B cell (primary cell): ENCODE measurements at regions of chr17 and their contacts with region 1.

Region 1: DNA sequence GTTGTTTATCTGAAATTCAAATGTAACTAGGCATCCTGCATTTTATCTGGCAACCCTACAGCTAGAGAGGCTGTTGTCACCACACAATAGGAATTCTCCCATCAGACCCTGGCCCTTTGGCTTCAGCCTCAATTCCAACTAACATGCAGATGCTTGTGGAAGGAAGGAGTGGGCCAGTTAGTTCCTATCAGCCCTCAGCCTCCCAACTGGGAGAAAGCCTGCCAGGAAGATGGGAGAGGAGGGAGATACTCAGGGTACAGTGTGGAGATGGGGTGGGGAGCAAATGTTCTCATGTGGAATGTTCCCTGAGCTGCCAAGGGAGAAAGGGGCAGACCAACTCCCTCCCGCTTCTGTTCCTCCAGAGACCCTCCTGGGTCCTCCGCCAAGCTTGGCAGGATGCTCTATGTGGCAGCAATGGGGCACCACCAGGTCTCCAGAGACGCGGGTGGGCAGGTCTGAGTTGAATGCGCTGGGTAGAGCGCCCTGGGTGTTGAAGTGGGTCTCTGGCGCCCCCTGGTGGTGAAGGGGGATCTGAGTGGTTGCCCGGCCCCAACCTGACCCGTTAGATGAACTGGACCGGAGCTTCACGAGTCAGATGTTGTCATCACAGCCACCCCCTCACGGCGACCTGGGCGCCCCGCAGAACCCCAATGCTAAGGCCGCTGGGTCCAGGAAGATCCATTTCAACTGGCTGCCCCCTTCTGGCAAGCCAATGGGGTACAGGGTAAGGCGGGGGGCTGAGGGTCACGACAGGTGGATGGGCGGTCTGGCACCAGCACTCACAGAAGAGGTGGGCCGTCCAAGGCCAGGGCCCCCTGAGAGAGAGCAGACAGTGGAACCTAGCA is 15.2 kb downstream of the GALK1 start:
- DNase-seq: peak; percentile 91
- ATAC-seq: peak; percentile 76
- H3K4me3 ChIP-seq: no peak overlapping the region
- H3K4me3 Mint-ChIP-seq: peak overlapping the region; percentile 35
- H3K27ac ChIP-seq: no peak overlapping the region
- H3K27ac Mint-ChIP-seq: peak overlapping the region; percentile 64
- H3K4me1 ChIP-seq: peaks cover 9 to 34% of the 10 kb centered on the region in 2 donors
- H3K4me1 Mint-ChIP-seq: peaks cover 21% of the 10 kb centered on the region
- H3K27me3 ChIP-seq: no peaks in the 10 kb centered on the region
- H3K27me3 Mint-ChIP-seq: peaks cover 4% of the 10 kb centered on the region
- CTCF ChIP-seq: peak; percentile 86

Region 2: DNA sequence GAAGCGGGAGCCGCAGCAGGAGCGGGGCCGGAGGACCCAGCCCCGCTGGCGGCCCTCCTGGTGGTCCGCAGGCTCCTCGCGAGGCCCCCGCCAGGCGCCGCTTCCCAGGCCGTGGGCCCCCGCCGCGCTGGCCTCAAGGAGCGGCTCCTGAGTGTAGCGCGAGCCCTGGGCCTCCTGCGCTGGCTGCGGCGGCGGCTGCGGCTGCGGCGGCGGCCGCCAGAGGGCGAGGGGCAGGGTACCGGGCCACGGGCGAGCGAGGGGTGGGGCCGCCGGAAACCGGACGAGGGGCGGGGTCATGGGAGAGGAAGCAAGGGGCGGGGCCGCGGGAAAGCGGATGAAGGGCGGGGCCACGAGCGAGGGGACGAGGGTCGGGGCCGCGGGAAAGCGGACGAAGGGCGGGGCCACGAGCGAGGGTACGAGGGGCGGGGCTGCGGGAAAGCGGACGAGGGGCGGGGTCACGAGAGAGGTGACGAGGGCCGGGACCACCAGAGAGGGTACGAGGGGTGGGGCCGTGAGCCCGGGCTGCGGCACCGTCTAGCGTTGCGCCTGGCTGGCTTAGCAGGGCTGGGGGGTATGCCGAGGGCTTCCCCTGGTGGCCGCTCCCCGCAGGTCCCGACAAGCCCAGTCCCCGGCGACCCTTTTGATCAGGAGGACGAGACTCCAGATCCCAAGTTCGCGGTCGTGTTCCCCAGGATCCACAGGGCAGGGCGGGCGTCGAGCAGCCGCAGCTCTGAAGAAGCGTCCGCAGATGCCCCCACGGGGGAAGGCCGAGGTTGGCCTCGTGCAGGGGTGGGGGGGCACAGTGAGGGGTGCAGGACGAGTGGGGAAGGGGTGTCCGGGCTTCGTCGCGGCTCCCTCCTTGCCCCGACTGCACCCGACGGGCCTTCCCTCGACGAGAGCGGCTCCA is 160.5 kb before region 1 on chr17:
- CTCF ChIA-PET with region 1: interaction called, 4 read pairs
- POLR2A ChIA-PET with region 1: interaction called, 3 read pairs
- intact Hi-C with region 1: loop called (anchors 1 kb)
- DNase-seq: peak; percentile 95
- ATAC-seq: peak; percentile 84
- H3K4me3 ChIP-seq: peak overlapping the region in 4 of 5 experiments; percentile 80 to 95 (median 84)
- H3K4me3 Mint-ChIP-seq: peak overlapping the region; percentile 86
- H3K27ac ChIP-seq: peak overlapping the region; percentile 80 to 89
- H3K27ac Mint-ChIP-seq: peak overlapping the region; percentile 81
- H3K4me1 ChIP-seq: peaks cover 4 to 20% of the 10 kb centered on the region in 2 donors
- H3K4me1 Mint-ChIP-seq: peaks cover 19% of the 10 kb centered on the region
- H3K27me3 ChIP-seq: no peaks in the 10 kb centered on the region
- H3K27me3 Mint-ChIP-seq: no peaks in the 10 kb centered on the region
- CTCF ChIP-seq: peak; percentile 59

Region 3: GRCh38 chr17:75645889-75646637 is 103.7 kb before region 1 on chr17:
- CTCF ChIA-PET with region 1: interaction called, 389 read pairs
- POLR2A ChIA-PET with region 1: no interaction called
- intact Hi-C with region 1: no loop called
- DNase-seq: peak; percentile 59
- ATAC-seq: peak; percentile 64
- H3K4me3 ChIP-seq: no peak overlapping the region
- H3K4me3 Mint-ChIP-seq: peak overlapping the region; percentile 49
- H3K27ac ChIP-seq: peak overlapping the region; percentile 18 to 66
- H3K27ac Mint-ChIP-seq: peak overlapping the region; percentile 70
- H3K4me1 ChIP-seq: peaks cover 8 to 12% of the 10 kb centered on the region in 2 donors
- H3K4me1 Mint-ChIP-seq: peaks cover 13% of the 10 kb centered on the region
- H3K27me3 ChIP-seq: no peaks in the 10 kb centered on the region
- H3K27me3 Mint-ChIP-seq: no peaks in the 10 kb centered on the region
- CTCF ChIP-seq: no peak

Region 4: DNA sequence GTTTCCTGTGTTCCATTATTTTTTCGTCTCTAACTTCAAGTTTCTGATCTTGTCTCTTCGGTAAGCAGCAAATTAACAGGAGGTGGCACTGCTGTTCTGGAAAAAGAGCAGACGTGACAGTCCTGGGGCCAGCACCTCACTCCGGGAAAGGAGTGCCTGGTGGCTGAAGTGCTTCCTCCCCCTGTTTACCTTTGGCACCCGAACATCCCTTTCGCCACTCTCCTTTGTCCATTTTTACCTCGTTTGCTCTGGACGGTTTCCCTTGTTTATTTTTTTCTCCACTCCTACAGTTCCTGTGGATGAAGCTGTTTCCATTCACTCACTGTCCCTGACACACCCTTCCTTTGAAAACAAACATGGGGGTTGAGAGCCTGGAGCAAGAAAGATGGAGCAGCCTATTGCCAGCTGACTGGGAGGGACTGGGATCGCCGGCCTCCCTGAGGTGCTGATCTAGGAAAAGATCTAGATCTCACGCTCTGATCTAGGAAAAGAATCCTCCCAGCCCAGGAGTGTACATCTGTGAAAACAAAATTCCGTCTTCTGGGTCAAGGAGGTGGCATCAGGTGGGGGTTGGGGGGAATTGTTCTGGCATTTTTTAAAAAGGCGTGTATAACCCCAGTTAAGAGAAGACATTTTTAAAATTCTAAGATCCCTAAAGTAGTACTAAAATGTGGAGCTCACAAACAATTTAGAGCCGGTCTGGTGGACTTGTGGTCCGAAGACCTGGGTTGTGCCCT is 69.9 kb before region 1 on chr17:
- CTCF ChIA-PET with region 1: interaction called, 144 read pairs
- POLR2A ChIA-PET with region 1: no interaction called
- intact Hi-C with region 1: loop called (anchors 1 kb)
- DNase-seq: no peak
- ATAC-seq: no peak
- H3K4me3 ChIP-seq: no peak overlapping the region
- H3K4me3 Mint-ChIP-seq: no peak overlapping the region
- H3K27ac ChIP-seq: no peak overlapping the region
- H3K27ac Mint-ChIP-seq: no peak overlapping the region
- H3K4me1 ChIP-seq: peaks cover 0 to 2% of the 10 kb centered on the region in 2 donors
- H3K4me1 Mint-ChIP-seq: peaks cover 18% of the 10 kb centered on the region
- H3K27me3 ChIP-seq: no peaks in the 10 kb centered on the region
- H3K27me3 Mint-ChIP-seq: no peaks in the 10 kb centered on the region
- CTCF ChIP-seq: no peak

Region 5: DNA sequence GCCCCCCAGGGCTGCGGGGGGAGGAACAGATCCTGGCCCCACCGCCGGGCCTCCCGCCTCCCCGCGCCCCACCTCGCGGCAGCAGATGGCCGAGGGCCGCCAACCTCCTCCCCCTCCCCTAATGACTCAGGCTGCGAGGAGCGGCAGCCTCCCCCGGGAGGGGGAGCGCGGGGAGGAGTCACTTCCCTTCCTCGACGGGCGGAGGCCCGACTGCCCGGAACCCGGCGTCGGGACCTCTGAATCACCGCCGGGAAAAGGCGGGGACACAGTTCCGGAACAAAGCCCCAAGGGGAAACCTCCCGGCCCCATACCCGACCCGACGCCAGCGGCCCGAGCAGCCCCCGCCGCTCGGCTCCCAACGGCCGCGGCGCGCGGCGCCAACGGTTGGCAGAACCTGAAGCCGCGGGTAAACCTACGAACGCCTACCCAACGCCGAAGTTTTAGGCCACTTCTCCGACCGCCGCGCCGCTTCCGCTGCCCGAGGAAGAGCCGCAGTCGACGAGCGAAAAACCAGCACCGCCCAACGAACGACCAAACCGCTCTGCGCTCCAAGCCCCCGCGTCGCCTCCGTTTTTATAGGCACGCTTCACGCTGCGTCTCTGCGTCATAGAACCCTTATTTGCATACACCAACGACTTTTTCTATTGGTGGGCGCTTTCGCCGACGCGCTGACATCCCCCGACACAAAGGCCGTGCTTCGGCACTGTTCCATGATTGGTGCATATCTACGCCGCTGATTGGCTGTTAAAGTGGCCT is 29.6 kb after region 1 on chr17:
- CTCF ChIA-PET with region 1: interaction called, 41 read pairs
- POLR2A ChIA-PET with region 1: interaction called, 11 read pairs
- intact Hi-C with region 1: no loop called
- DNase-seq: peak; percentile 99
- ATAC-seq: peak; percentile 62
- H3K4me3 ChIP-seq: peak overlapping the region; percentile 89 to 95 (median 95)
- H3K4me3 Mint-ChIP-seq: peak overlapping the region; percentile 94
- H3K27ac ChIP-seq: peak overlapping the region; percentile 88 to 97
- H3K27ac Mint-ChIP-seq: peak overlapping the region; percentile 99
- H3K4me1 ChIP-seq: peaks cover 36 to 59% of the 10 kb centered on the region in 2 donors
- H3K4me1 Mint-ChIP-seq: peaks cover 63% of the 10 kb centered on the region
- H3K27me3 ChIP-seq: no peaks in the 10 kb centered on the region
- H3K27me3 Mint-ChIP-seq: no peaks in the 10 kb centered on the region
- CTCF ChIP-seq: no peak

Region 6: DNA sequence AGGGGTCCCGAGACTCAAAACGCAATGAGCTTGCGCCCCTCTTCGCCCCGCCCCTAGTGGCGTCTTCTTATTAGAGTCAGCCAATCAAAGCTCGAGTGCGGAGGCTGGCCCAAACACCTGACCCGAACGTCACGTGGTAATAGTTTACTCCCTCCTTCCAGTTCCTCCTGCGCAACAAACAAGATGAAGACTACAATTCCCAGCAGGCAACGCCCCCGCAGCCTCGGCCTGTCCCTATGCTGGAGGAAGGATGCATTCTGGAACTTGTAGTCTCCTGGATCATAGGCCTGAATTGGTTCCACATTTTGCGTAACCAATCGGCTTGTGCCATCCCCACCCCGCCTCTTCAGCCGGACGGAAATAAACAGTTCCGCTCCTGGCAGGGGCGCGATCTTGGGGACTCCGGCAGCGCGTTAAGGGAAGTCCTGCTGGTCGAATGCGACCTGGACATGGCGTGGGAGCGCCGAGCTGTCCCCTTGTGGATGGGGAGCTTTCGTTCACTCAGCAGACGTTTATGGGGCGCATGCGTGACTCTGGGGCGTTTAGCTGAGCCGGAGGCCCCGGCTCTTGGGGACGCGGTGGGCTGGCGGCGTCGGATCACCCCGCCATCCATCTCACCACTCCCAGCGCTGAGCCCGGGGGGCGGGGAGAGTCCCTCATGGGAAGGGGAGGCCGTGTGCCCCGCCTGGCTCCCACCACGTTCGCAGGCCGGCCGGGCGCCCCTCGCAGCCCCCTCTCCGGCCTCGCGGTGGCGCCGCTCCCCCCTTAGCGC is 105.7 kb after region 1 on chr17 and contains the start of gene WBP2:
- CTCF ChIA-PET with region 1: interaction called, 15 read pairs
- POLR2A ChIA-PET with region 1: interaction called, 6 read pairs
- intact Hi-C with region 1: no loop called
- DNase-seq: peak; percentile 100
- ATAC-seq: peak; percentile 84
- H3K4me3 ChIP-seq: peak within 1 kb of the TSS; percentile 75 to 98 (median 94)
- H3K4me3 Mint-ChIP-seq: no peak within 1 kb of the TSS
- H3K27ac ChIP-seq: peak within 1 kb of the TSS; percentile 89 to 92
- H3K27ac Mint-ChIP-seq: no peak within 1 kb of the TSS
- H3K4me1 ChIP-seq: peaks cover 34 to 53% of the 10 kb centered on the region in 2 donors
- H3K4me1 Mint-ChIP-seq: peaks cover 42% of the 10 kb centered on the region
- H3K27me3 ChIP-seq: no peaks in the 10 kb centered on the region
- H3K27me3 Mint-ChIP-seq: no peaks in the 10 kb centered on the region
- CTCF ChIP-seq: peak; percentile 64
- total RNA-seq, gene WBP2: 132 and 140 TPM in 2 replicates

Region 7: GRCh38 chr17:77127735-77128361 is 1378.1 kb after region 1 on chr17:
- CTCF ChIA-PET with region 1: no interaction called
- POLR2A ChIA-PET with region 1: no interaction called
- intact Hi-C with region 1: no loop called
- DNase-seq: peak; percentile 51
- ATAC-seq: peak; percentile 75
- H3K4me3 ChIP-seq: peak overlapping the region in 4 of 5 experiments; percentile 8 to 32 (median 24)
- H3K4me3 Mint-ChIP-seq: peak overlapping the region; percentile 68
- H3K27ac ChIP-seq: no peak overlapping the region
- H3K27ac Mint-ChIP-seq: peak overlapping the region; percentile 50
- H3K4me1 ChIP-seq: peaks cover 4 to 8% of the 10 kb centered on the region in 2 donors
- H3K4me1 Mint-ChIP-seq: peaks cover 8% of the 10 kb centered on the region
- H3K27me3 ChIP-seq: peaks cover 0 to 7% (median 0%) of the 10 kb centered on the region in 4 experiments
- H3K27me3 Mint-ChIP-seq: peaks cover 18% of the 10 kb centered on the region
- CTCF ChIP-seq: no peak